ENCODE measurements at regions of chr4 and their contacts with region 1.

Region 1: GRCh38 chr4:6986781-6987587 is 56.2 kb upstream of the TADA2B start:
- DNase-seq: peak; percentile 99
- CTCF ChIP-seq: peak; percentile 22

Region 2: GRCh38 chr4:6909073-6909965 is 77.7 kb before region 1 on chr4 and contains the start of gene TBC1D14:
- in situ Hi-C with region 1: loop called (anchors 10 kb)
- DNase-seq: peak; percentile 97
- CTCF ChIP-seq: no peak

Region 3: DNA sequence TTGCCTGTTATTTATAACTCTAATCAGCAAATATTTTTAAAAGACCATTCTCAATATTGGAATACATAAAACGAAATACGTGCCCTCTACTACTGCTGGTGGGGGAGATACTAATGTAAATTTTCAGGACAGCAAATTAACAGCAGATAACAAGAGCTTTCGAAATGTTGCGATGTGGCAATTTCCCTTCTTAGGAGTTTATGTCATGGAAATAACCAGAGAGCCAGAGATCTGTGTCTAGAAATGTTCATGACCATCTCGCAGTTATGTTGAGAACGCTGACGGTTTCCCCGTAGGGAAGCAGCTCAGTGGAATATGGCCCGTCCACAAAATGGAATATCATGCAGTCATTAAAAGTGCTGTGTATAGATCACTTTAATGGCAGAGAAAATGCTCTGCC is 686.1 kb after region 1 on chr4:
- in situ Hi-C with region 1: no loop called
- DNase-seq: no peak
- CTCF ChIP-seq: no peak

Measured in GM13976 (cell line).